Heart left ventricle (tissue), 16 donors: ENCODE measurements at regions of chr12 and their contacts with region 1.

Region 1: DNA sequence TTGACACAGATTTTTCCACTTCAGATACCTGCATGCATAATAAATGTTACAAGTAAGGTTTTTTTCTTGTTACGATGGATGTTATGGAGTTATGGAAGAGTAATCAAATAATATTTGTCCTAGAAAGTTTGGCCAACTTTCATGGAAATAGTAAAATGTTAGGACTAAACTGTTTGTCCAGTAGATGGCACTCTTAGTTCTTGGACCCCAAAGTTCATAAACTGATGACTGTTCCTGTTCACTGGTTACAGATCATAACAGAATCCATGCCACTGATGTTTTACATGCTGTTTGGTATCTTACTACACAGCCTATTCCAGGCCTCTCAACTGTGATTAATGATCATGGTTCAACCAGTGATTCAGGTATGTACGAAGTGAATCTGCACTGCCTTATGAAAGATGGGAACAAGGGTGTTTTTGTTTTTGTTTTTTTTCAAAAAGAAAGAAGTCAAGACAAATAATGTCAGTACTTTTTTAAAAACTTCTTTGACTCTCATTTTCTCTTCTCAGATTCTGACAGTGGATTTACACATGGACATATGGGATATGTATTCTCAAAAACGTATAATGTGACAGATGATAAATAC is 48.8 kb upstream of the SLCO1C1 start:
- DNase-seq: no peak
- ATAC-seq: peak in 3 of 4 donors; percentile 25 to 56 (median 36)
- H3K4me3 ChIP-seq: no peak overlapping the region
- H3K27ac ChIP-seq: no peak overlapping the region
- H3K4me1 ChIP-seq: peaks cover 0 to 10% (median 0%) of the 10 kb centered on the region in 12 donors
- H3K27me3 ChIP-seq: no peaks in the 10 kb centered on the region
- CTCF ChIP-seq: peak in 11 of 12 donors; percentile 24 to 63 (median 47)
- POLR2A ChIP-seq: no peak

Region 2: DNA sequence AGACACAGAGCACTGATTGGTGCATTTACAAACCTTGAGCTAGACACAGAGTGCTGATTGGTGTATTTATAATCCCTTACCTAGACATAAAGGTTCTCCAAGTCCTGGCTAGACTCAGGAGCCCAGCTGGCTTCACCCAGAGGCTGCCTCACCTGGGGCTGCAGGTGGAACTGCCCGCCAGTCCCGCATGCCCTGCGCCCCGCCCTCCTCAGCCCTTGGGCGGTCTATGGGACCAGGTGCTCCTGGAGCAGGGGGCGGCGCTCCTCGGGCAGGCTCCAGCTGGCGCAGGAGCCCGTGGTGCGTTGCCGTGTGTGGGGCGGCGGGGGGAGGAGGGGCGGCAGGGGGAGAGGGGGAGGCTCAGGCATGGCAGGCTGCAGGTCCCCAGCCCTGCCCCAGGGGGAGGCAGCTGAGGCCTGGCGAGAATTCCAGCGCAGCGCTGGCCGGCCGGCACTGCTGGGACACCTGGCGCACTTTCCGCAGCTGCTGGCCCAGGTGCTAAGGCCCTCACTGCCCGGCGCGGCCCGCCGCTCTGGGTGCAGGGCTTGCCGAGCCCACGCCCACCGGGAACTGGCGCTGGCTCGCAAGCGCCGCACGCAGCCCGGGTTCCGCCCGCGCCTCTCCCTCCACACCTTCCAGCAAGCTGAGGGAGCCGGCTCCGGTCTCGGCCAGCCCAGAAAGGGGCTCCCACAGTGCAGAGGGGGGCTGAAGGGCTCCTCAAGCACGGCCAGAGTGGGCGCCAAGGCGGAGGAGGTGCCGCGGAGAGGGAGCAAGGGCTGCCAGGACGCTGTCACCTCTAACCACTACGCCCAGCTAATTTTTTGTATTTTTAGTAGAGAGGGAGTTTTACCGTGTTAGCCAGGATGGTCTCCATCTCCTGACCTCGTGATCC is 161.1 kb after region 1 on chr12:
- intact Hi-C with region 1: loop called in 1 of 10 experiments (anchors 10 kb)
- DNase-seq: peak in 1 of 5 donors; percentile 62
- ATAC-seq: no peak
- H3K4me3 ChIP-seq: no peak overlapping the region
- H3K27ac ChIP-seq: no peak overlapping the region
- H3K4me1 ChIP-seq: no peaks in the 10 kb centered on the region
- H3K27me3 ChIP-seq: no peaks in the 10 kb centered on the region
- CTCF ChIP-seq: no peak
- POLR2A ChIP-seq: no peak